H1 (cell line): ENCODE measurements at regions of chr3 and their contacts with region 1.

Region 1: DNA sequence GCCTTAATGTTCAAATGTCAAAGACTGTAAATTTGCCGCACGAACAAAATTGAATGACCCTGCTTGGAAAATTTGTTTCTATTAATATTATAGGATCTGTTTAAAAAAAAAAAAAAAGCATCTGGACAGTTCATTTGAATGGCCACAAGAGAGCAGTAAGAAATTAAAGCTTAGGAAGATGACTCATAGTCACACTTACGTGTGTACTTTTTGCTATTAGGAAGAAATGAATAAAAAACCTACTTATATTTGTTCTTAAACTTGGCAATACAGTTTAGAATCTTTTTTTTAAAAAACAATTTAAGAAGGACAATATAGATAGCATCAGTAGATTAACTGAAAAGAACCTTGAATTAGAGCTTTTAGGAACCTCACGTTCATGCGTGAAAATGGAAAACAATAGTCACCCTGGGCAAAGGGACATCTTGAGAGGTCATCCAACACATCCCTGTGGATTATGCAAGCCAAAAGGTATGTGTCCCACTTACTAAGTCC is 621.8 kb downstream of the MECOM start:
- DNase-seq: no peak
- H3K4me3 ChIP-seq: no peak overlapping the region
- H3K27ac ChIP-seq: no peak overlapping the region
- H3K4me1 ChIP-seq: no peaks in the 10 kb centered on the region
- H3K27me3 ChIP-seq: no peaks in the 10 kb centered on the region
- CTCF ChIP-seq: peak in 1 of 3 experiments; percentile 6; a peak in 1 of 4 replicates
- EP300 ChIP-seq: no peak
- POLR2A ChIP-seq: no peak
- RAD21 ChIP-seq: peak in 1 of 2 experiments; percentile 43; a peak in 3 of 4 replicates

Region 2: GRCh38 chr3:169133178-169134161 is 91.7 kb after region 1 on chr3:
- CTCF ChIA-PET with region 1: interaction called, 10 read pairs
- POLR2A ChIA-PET with region 1: no interaction called
- DNase-seq: no peak
- H3K4me3 ChIP-seq: no peak overlapping the region
- H3K27ac ChIP-seq: no peak overlapping the region
- H3K4me1 ChIP-seq: peaks cover 0 to 3% (median 0%) of the 10 kb centered on the region in 4 experiments; a peak in 1 of 7 replicates
- H3K27me3 ChIP-seq: no peaks in the 10 kb centered on the region
- CTCF ChIP-seq: peak in 1 of 3 experiments; percentile 7; a peak in 2 of 4 replicates
- EP300 ChIP-seq: no peak
- POLR2A ChIP-seq: no peak
- RAD21 ChIP-seq: peak in 1 of 2 experiments; percentile 28; a peak in 3 of 4 replicates